PC-9 (cell line): ENCODE measurements at regions of chr12 and their contacts with region 1.

Region 1: DNA sequence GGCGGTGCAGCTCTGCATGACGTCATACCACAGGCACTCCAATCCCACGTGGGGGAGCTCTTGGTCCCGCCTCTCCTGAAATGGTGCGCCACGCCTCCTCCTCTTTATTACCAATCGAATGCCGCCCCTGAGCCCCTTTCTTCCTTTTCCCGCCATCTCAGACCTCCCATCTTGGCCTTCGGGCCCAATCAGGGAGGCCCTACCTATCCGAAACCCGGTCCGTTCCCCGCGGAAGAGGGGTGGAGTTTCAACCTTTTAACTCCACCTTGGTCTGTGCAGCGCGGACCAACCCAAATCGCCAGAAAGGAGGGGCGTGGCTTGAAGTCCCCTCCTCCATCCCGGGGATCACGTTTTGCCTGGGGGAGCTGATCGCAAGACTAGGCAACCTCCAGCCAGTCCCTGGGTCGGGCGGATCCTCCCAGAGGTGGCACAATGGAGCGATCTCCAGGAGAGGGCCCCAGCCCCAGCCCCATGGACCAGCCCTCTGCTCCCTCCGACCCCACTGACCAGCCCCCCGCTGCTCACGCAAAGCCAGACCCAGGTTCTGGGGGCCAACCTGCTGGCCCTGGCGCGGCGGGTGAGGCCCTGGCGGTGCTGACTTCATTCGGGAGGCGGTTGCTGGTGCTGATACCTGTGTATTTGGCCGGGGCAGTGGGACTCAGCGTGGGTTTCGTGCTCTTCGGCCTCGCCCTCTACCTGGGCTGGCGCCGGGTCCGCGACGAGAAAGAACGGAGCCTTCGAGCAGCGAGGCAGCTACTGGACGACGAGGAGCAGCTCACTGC is at the start of gene ESYT1:
- DNase-seq: peak; percentile 98 to 99
- H3K4me3 ChIP-seq: peak within 1 kb of the TSS; percentile 77
- H3K27ac ChIP-seq: peak within 1 kb of the TSS; percentile 46; the same call in 1 of the 2 replicates
- H3K4me1 ChIP-seq: peaks cover 31% of the 10 kb centered on the region
- H3K27me3 ChIP-seq: no peaks in the 10 kb centered on the region
- CTCF ChIP-seq: no peak
- total RNA-seq, gene ESYT1: 46.1 and 52.2 TPM in 2 replicates

Region 2: GRCh38 chr12:56084958-56085543 is 43.0 kb before region 1 on chr12:
- CTCF ChIA-PET with region 1: interaction called, 12 read pairs
- POLR2A ChIA-PET with region 1: interaction called, 3 read pairs
- intact Hi-C with region 1: no loop called
- DNase-seq: no peak
- H3K4me3 ChIP-seq: no peak overlapping the region
- H3K27ac ChIP-seq: no peak overlapping the region
- H3K4me1 ChIP-seq: peaks cover 42% of the 10 kb centered on the region
- H3K27me3 ChIP-seq: no peaks in the 10 kb centered on the region
- CTCF ChIP-seq: peak; percentile 48; the same call in 1 of the 2 replicates

Region 3: GRCh38 chr12:56152318-56153033 is 24.4 kb after region 1 on chr12 and contains the start of gene MYL6B:
- CTCF ChIA-PET with region 1: interaction called, 5 read pairs
- POLR2A ChIA-PET with region 1: interaction called, 5 read pairs
- intact Hi-C with region 1: loop called (anchors 1 kb)
- DNase-seq: peak; percentile 80 to 89
- H3K4me3 ChIP-seq: peak within 1 kb of the TSS; percentile 77
- H3K27ac ChIP-seq: peak within 1 kb of the TSS; percentile 83
- H3K4me1 ChIP-seq: peaks cover 29% of the 10 kb centered on the region
- H3K27me3 ChIP-seq: no peaks in the 10 kb centered on the region
- CTCF ChIP-seq: no peak
- total RNA-seq, gene MYL6B: 120 and 121 TPM in 2 replicates

Region 4: GRCh38 chr12:56158029-56158925 is 30.2 kb after region 1 on chr12 and contains the start of gene MYL6:
- CTCF ChIA-PET with region 1: interaction called, 5 read pairs
- POLR2A ChIA-PET with region 1: interaction called, 13 read pairs
- intact Hi-C with region 1: no loop called
- DNase-seq: peak; percentile 89 to 93
- H3K4me3 ChIP-seq: peak within 1 kb of the TSS; percentile 95
- H3K27ac ChIP-seq: peak within 1 kb of the TSS; percentile 82
- H3K4me1 ChIP-seq: peaks cover 26% of the 10 kb centered on the region
- H3K27me3 ChIP-seq: no peaks in the 10 kb centered on the region
- CTCF ChIP-seq: no peak
- total RNA-seq, gene MYL6: 666 and 697 TPM in 2 replicates

Region 5: GRCh38 chr12:56189176-56189917 is 61.3 kb after region 1 on chr12 and contains the start of gene SMARCC2:
- CTCF ChIA-PET with region 1: interaction called, 4 read pairs
- POLR2A ChIA-PET with region 1: interaction called, 15 read pairs
- intact Hi-C with region 1: loop called (anchors 1 kb)
- DNase-seq: peak; percentile 71 to 91
- H3K4me3 ChIP-seq: peak within 1 kb of the TSS; percentile 99
- H3K27ac ChIP-seq: peak within 1 kb of the TSS; percentile 85
- H3K4me1 ChIP-seq: peaks cover 28% of the 10 kb centered on the region
- H3K27me3 ChIP-seq: no peaks in the 10 kb centered on the region
- CTCF ChIP-seq: peak; percentile 68
- total RNA-seq, gene SMARCC2: 70.3 and 86.4 TPM in 2 replicates

Region 6: DNA sequence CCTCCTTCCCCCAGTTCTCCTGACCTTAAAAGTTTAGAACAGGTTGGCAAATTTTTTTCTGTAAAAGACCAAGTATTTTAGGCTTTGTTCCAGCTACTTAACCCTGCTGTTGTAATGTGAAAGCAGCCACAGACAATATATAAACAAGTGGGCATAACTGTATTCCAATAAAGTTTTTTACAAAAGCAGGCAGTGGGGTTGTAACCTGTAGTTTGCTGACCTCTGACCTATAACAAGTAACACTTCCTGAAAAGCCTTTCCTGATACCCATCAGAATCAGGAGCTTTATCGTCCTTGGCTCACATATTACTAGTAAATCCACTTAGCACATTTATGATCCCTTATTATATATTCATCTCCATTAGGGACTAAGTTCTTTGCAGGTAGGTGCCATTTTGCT is 74.3 kb after region 1 on chr12:
- CTCF ChIA-PET with region 1: no interaction called
- POLR2A ChIA-PET with region 1: no interaction called
- intact Hi-C with region 1: no loop called
- DNase-seq: no peak
- H3K4me3 ChIP-seq: no peak overlapping the region
- H3K27ac ChIP-seq: no peak overlapping the region
- H3K4me1 ChIP-seq: no peaks in the 10 kb centered on the region
- H3K27me3 ChIP-seq: no peaks in the 10 kb centered on the region
- CTCF ChIP-seq: no peak